ENCODE measurements at regions of chr11 and their contacts with region 1.

Region 1: DNA sequence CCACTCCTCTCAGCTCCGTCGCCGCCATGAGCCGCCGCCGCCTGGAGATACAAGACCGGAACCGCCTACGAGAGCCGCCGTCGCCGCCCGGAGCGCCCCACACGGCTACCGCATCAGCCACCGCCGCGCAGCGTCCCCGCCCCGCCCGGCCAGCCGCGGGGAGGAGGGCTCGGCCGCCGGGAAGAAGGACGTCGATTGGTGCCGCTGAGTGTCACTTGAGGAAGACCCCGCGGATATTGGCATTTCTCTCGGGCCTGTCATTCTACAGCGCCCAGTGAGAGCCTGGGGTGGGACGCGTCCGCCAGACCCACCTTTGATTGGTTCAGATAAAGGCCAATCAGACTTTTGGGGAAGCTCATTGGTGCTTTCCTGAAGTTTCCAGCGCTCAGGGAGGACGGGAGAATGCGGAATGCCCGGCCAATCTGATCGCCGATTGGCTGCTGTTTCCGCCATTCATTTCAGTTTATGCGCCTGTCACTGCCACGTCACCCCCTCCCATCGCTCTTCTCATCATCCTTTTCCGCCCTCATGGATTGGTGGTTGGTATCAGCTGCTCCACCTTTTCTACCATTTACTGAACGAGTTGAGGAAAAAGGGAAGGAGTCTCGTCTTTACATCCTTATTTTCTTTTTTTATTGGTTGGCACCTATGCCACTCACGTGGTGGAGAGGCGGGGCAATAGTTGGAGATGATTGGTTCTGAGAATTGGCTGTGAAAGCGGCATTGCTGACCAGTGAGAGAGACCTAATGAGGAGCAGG is at the start of gene OSBP:
- DNase-seq: peak; percentile 100
- ATAC-seq: peak; percentile 85 to 86
- H3K4me3 ChIP-seq: peak within 1 kb of the TSS; percentile 72 to 88 (median 82)
- H3K27ac ChIP-seq: peak within 1 kb of the TSS; percentile 90 to 97 (median 94)
- H3K4me1 ChIP-seq: peaks cover 42 to 44% of the 10 kb centered on the region in 2 donors
- H3K27me3 ChIP-seq: no peaks in the 10 kb centered on the region
- CTCF ChIP-seq: peak in 2 of 5 experiments; percentile 7 to 38
- POLR2A ChIP-seq: peak; percentile 91 to 93
- total RNA-seq, gene OSBP: 27.4 to 45.2 (median 34.9) TPM

Region 2: DNA sequence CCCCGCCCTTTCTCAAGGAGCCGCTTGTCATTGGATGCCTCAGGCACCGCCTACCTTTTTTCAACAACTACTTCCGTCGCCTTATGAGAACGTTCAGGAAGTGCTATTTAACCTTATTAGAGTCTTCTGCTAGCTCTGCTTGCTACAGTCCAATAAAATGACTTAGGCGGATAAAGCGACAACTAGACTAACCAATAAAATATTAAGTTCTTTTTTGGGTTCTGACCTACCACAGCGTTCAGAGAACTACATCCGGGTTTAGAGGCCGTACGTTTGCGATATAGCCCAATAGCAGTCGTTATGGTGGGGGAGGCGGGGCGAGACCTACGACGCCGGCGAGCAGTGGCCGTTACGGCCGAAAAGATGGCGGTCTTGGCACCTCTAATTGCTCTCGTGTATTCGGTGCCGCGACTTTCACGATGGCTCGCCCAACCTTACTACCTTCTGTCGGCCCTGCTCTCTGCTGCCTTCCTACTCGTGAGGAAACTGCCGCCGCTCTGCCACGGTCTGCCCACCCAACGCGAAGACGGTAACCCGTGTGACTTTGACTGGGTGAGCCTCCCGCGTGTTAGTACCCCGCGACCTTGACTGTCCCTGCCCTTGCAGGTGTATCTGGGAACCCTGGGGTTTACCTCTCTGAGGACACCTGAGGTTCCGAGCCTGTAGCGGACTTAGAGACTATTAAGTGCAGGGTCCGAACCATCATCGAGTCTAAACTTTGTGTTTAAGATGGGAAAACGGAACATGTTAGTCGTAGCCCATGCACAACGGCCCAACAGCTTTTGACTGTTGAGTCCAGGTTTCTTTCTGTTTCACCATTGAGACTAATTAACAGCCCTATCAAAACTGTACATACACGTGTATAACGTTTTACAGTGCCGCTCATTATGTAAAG is 1903.3 kb before region 1 on chr11 and contains the start of gene TMX2:
- in situ Hi-C with region 1: no loop called
- intact Hi-C with region 1: loop called (anchors 5 kb)
- DNase-seq: peak; percentile 90 to 95
- ATAC-seq: peak; percentile 98
- H3K4me3 ChIP-seq: peak within 1 kb of the TSS; percentile 82 to 99 (median 92)
- H3K27ac ChIP-seq: peak within 1 kb of the TSS; percentile 87 to 91 (median 89)
- H3K4me1 ChIP-seq: peaks cover 33 to 34% of the 10 kb centered on the region in 2 donors
- H3K27me3 ChIP-seq: no peaks in the 10 kb centered on the region
- CTCF ChIP-seq: peak in 1 of 5 experiments; percentile 3
- POLR2A ChIP-seq: peak; percentile 49 to 59
- total RNA-seq, gene TMX2: 29.1 to 54.9 (median 40.5) TPM

Region 3: DNA sequence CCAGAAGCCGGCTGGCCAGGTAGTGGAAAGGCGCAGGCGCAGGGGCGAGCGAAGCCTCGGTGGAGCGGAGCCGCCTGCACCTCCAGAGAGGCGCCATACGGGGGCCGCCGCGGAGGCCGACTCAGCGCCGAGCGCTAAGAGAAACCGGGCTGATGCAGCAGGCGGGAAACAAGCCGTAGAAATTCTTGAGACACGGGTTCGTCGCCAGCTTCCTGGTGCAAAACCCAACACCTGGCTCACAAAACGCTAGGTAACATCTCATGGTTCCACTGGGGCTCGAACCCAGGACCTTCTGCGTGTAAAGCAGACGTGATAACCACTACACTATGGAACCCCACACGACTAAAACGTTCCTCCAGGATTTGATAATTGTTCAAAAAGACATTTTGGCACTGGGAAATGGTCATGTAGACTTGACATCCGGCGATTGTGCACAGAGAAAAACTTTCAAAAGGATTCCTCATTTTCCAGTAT is 65.4 kb before region 1 on chr11:
- in situ Hi-C with region 1: no loop called
- intact Hi-C with region 1: loop called (anchors 2 kb)
- DNase-seq: peak; percentile 50 to 67
- ATAC-seq: peak; percentile 71 to 73
- H3K4me3 ChIP-seq: peak overlapping the region; percentile 62 to 75 (median 67)
- H3K27ac ChIP-seq: peak overlapping the region; percentile 73 to 84 (median 78)
- H3K4me1 ChIP-seq: peaks cover 4 to 10% of the 10 kb centered on the region in 2 donors
- H3K27me3 ChIP-seq: no peaks in the 10 kb centered on the region
- CTCF ChIP-seq: peak; percentile 30 to 63 (median 55)
- POLR2A ChIP-seq: no peak

Region 4: GRCh38 chr11:59668950-59669610 is 53.3 kb after region 1 on chr11 and contains the start of gene PATL1:
- in situ Hi-C with region 1: loop called in 2 of 4 experiments (anchors 5 to 10 kb)
- intact Hi-C with region 1: loop called (anchors 1 kb)
- DNase-seq: peak; percentile 100
- ATAC-seq: peak; percentile 93 to 97
- H3K4me3 ChIP-seq: peak within 1 kb of the TSS; percentile 90 to 97 (median 96)
- H3K27ac ChIP-seq: peak within 1 kb of the TSS; percentile 95 to 99 (median 97)
- H3K4me1 ChIP-seq: peaks cover 19 to 26% of the 10 kb centered on the region in 2 donors
- H3K27me3 ChIP-seq: no peaks in the 10 kb centered on the region
- CTCF ChIP-seq: peak in 1 of 5 experiments; percentile 38
- POLR2A ChIP-seq: peak; percentile 90 to 94
- total RNA-seq, gene PATL1: 19.0 to 29.9 (median 26.2) TPM

Region 5: DNA sequence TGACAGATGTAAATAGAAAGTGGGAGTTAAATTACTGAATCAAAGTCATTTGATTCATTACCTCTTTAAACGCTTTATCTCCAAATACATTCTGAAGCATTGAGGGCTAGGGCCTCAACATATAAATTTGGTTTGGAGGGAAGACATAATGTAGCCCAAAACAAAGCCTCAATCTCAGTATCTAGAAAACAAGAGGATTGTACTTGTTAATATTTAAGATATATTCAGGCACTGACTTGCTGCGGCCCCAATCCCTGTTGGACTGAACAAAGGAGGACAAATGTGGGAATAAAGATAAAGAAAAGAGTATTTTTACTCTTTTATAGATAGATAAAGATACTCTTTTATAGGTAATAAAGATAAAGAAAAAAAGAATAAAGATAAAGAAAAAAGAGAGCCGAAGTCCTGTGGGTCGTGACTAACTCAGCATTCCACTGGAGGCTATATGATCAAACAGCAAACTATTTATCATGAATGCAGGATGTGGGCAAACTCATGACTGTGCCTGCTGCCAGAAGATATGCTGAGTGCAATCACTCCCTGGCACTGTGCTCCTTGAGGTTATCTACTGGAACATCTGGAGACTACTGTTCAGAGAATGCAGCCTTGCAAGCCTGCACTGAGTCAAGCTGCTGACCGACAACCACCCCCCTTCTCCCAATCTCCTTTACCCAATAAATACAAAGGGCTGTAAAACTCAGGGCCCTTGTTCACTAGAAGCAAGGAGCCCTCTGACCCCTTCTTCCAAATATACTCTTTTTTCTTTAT is 90.9 kb after region 1 on chr11:
- in situ Hi-C with region 1: no loop called
- intact Hi-C with region 1: no loop called
- DNase-seq: no peak
- ATAC-seq: no peak
- H3K4me3 ChIP-seq: no peak overlapping the region
- H3K27ac ChIP-seq: no peak overlapping the region
- H3K4me1 ChIP-seq: no peaks in the 10 kb centered on the region
- H3K27me3 ChIP-seq: no peaks in the 10 kb centered on the region
- CTCF ChIP-seq: no peak
- POLR2A ChIP-seq: no peak

Region 6: DNA sequence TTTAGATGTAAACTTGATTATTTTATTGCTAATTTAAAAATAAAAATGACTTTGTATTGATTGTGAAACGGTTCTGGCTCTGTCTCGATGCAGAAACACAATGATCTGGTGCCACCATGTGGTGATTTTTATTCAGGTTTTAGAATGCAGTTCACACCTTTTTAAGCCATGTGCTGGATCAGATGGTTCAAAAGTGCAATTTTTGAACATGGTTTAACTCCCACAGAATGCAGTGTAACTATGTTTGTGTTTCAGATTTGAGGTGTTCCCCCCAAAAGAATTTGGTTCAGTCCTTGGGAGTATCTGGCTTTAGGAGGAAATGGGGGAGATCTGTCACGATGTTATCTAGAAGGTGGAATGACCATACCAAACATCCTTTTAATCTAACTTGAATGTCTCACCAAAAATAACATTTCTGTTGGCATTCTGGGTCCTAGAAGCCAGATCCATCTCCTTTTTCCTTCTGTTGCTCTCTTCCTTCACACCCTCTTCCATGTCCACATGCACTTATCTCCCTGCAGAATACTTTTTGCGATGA is 186.9 kb after region 1 on chr11:
- in situ Hi-C with region 1: no loop called
- intact Hi-C with region 1: loop called (anchors 5 kb)
- DNase-seq: peak in 1 of 2 donors; percentile 18
- ATAC-seq: peak; percentile 84 to 85
- H3K4me3 ChIP-seq: no peak overlapping the region
- H3K27ac ChIP-seq: peak overlapping the region; percentile 36 to 78 (median 64)
- H3K4me1 ChIP-seq: peaks cover 6 to 9% of the 10 kb centered on the region in 2 donors
- H3K27me3 ChIP-seq: no peaks in the 10 kb centered on the region
- CTCF ChIP-seq: peak; percentile 59 to 83 (median 64)
- POLR2A ChIP-seq: no peak

Measured in gastrocnemius medialis (tissue), 4 donors.